ENCODE measurements at regions of chr22 and their contacts with region 1.

Region 1: DNA sequence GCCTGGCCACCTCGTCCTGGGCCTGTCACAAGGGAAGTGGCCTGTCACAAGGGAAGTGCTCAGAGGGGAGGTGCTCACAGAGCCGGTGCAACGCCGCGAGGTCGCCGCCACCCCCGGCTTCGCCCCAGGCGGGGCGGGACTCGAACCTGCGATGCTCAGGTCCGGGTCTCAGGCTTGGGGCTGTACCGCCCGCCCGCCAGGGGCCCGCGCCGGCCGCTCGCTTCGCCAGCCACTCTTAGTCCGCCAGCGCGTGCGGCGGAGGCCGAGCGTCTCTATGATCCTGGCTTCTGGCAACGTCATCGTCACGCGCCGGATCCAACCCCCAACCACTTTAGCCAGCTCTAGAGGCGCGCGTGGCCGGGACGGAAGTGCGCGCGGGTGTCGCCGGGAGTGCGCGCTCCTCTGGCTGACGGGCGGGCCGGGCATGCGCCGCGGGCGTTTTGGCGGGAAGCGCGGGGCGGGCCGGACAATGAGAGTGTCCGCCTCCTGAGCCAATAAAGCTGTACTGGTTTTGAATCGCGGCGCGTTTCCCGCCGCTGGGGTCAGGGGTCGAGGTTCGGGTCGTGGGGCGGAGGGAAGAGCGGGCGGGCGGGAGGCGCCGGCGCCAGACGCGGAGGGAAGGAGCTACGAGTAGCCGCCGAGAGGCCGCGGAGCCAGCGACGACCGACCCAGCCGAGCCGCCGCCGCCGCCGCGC is at the start of gene TRMT2A:
- DNase-seq: peak; percentile 98
- ATAC-seq: peak; percentile 86
- H3K4me3 Mint-ChIP-seq: peak within 1 kb of the TSS; percentile 89
- H3K27ac Mint-ChIP-seq: peak within 1 kb of the TSS; percentile 91
- H3K4me1 Mint-ChIP-seq: peaks cover 62% of the 10 kb centered on the region
- H3K27me3 Mint-ChIP-seq: no peaks in the 10 kb centered on the region
- total RNA-seq, gene TRMT2A: 98.1 to 140 TPM

Region 2: DNA sequence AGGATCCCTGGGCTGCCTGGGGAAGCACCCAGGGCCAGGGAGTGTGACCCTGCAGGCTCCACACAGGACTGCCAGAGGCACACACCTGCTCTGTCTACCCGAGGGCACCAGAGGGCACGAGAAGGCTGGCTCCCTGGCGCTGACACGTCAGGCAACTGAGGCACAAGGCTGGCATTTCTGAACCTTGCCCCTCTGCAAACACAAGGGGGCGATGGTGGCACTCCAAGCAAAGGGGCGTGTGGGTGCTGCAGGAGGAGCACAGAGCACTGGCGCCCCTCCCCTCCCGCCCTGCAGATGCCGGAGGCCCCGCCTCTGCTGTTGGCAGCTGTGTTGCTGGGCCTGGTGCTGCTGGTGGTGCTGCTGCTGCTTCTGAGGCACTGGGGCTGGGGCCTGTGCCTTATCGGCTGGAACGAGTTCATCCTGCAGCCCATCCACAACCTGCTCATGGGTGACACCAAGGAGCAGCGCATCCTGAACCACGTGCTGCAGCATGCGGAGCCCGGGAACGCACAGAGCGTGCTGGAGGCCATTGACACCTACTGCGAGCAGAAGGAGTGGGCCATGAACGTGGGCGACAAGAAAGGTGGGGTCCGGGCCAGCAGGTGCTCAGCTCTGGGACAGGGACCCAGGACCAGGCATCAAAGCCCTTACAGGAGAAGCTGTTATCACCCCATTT is 154.7 kb before region 1 on chr22:
- CTCF ChIA-PET with region 1: no interaction called
- DNase-seq: peak; percentile 83
- ATAC-seq: peak; percentile 68
- H3K4me3 Mint-ChIP-seq: no peak overlapping the region
- H3K27ac Mint-ChIP-seq: no peak overlapping the region
- H3K4me1 Mint-ChIP-seq: peaks cover 24% of the 10 kb centered on the region
- H3K27me3 Mint-ChIP-seq: no peaks in the 10 kb centered on the region

Region 3: GRCh38 chr22:20130739-20131596 is 13.9 kb after region 1 on chr22:
- CTCF ChIA-PET with region 1: interaction called, 17 read pairs
- DNase-seq: peak; percentile 76
- ATAC-seq: peak; percentile 68
- H3K4me3 Mint-ChIP-seq: no peak overlapping the region
- H3K27ac Mint-ChIP-seq: no peak overlapping the region
- H3K4me1 Mint-ChIP-seq: peaks cover 21% of the 10 kb centered on the region
- H3K27me3 Mint-ChIP-seq: no peaks in the 10 kb centered on the region